Aorta (tissue), 5 donors: ENCODE measurements at regions of chr16 and their contacts with region 1.

Region 1: GRCh38 chr16:56513972-56514371 is 5.9 kb downstream of the BBS2 start:
- DNase-seq: no peak
- ATAC-seq: peak; percentile 64
- H3K4me3 ChIP-seq: no peak overlapping the region
- H3K27ac ChIP-seq: no peak overlapping the region
- H3K4me1 ChIP-seq: peaks cover 3% of the 10 kb centered on the region in 2 donors
- H3K27me3 ChIP-seq: no peaks in the 10 kb centered on the region

Region 2: DNA sequence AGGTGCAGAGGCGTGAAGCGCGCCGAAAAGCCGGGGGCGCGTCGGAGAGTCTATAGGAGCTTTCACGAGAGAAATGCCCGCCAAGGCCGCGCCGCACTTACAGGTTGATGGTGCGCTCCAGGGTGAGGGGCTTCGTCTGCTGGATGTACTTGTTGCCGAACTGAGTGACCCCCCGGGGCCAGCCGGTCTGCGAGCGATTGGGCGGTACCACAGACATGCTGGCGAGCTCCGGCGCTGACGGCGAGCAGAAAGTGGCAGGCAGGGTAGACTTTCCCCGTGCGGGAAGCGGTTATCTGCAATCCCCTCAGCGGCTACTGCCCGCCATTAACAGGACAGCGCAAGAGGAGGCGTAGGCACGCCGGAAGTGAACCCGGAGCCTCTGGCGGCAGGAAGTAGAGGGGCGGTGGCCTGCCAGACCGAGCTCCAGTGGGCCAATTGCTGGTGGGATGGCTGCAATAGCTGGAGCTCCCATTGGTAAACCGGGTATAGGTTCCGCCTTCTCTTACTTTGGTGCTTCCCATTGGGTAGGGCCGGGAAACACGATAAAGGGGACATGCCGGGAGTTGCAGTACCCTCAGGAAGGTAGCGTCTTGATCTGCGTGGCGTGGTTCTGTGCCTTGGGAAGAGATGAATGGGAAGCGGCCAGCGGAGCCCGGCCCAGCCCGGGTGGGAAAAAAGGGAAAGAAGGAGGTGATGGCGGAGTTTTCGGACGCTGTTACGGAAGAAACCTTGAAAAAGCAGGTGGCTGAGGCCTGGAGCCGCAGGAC is 62.8 kb before region 1 on chr16 and contains the starts of genes NUDT21 and OGFOD1:
- intact Hi-C with region 1: no loop called
- DNase-seq: peak; percentile 96 to 97
- ATAC-seq: peak; percentile 99
- H3K4me3 ChIP-seq: peak within 1 kb of the TSS; percentile 30 to 78
- H3K27ac ChIP-seq: peak within 1 kb of the TSS; percentile 45 to 91
- H3K4me1 ChIP-seq: peaks cover 0 to 2% of the 10 kb centered on the region in 2 donors
- H3K27me3 ChIP-seq: no peaks in the 10 kb centered on the region
- total RNA-seq, gene NUDT21: 72.6 to 79.3 TPM
- total RNA-seq, gene OGFOD1: 30.7 to 33.5 TPM

Region 3: GRCh38 chr16:56600398-56600999 is 86.5 kb after region 1 on chr16:
- intact Hi-C with region 1: loop called (anchors 2 to 10 kb)
- DNase-seq: no peak
- ATAC-seq: peak; percentile 57
- H3K4me3 ChIP-seq: no peak overlapping the region
- H3K27ac ChIP-seq: no peak overlapping the region
- H3K4me1 ChIP-seq: no peaks in the 10 kb centered on the region
- H3K27me3 ChIP-seq: no peaks in the 10 kb centered on the region